ENCODE measurements at regions of chr6 and their contacts with region 1.

Region 1: DNA sequence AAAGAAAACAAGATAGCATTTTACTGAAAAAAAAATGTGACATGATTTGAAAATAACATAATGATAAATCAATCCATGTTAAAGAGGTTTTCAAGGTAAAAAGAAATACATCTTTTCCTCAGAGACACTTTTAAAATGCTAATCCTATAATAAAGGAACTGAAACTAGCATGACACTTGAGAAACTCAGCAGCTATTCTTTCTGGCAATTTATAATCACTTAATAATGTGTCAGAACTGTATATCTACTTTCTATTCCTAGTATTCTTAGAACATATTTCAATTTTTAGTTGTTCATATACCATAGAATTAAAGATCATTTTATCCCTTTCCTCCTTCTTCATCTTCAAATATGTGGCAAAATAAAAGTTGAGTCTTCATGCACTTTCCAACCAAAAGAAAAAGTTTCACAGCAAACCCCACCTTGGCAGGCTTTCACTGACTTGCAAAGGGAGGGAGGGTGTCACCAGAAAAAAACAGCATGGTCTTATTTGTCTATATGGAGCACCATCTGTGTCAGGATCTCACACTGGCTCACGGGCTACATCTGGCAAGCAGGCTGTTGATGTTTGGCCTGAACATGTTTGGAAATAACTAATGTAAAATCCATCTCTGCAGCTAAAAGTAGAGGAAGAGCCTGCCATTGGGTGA is 48.5 kb downstream of the FHL5 start:
- DNase-seq: no peak

Region 2: DNA sequence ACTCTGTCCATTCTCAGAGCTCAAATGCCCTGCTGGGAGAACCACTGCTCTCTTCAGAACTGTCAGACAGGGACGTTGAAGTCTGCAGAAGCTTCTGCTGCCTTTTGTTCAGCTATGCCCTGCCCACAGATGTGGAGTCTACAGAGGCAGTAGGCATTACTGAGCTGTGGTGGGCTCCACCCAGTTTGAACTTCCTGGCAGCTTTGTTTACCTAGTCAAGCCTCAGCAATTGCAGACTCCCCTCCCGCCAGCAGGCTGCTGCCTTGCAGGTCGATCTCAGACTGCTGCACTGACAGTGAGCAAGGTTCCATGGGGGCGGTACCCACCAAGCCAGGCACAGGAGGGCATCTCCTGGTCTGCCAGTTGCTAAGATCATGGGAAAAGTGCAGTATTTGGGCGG is 111.7 kb before region 1 on chr6:
- CTCF ChIA-PET with region 1: no interaction called
- POLR2A ChIA-PET with region 1: no interaction called
- DNase-seq: no peak

Region 3: GRCh38 chr6:96626759-96627364 is 15.4 kb after region 1 on chr6:
- CTCF ChIA-PET with region 1: interaction called, 12 read pairs
- POLR2A ChIA-PET with region 1: no interaction called
- DNase-seq: peak; percentile 35